ENCODE measurements at regions of chr5 and their contacts with region 1.

Region 1: GRCh38 chr5:97162045-97162444 is 19.6 kb upstream of the LIX1 start:
- ATAC-seq: peak in 7 of 8 experiments; percentile 40 to 86 (median 65)
- H3K4me3 ChIP-seq: no peak overlapping the region
- H3K27ac ChIP-seq: no peak overlapping the region
- H3K4me1 ChIP-seq: peaks cover 5% of the 10 kb centered on the region in 2 donors

Region 2: DNA sequence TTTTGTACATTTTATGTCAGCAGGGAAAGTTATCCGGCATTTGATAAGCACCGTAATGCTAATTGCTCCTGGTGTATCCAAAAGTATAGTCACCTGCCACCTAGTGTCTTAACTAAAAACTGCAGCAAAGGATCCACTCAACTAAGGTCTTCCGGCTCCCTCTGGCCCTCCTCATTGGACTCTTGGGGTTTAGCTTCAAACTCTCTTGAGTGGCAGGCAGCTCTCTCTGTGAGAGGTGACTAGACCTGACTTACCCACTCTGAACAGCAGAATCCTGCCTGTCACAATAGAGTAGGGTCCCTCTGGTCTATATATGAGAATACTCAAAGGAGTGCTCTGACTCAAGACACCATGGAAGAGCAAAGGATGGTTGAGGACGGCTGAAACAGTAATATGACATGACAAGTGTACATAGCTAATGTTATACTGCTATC is 560.2 kb before region 1 on chr5:
- in situ Hi-C with region 1: loop called in 1 of 9 experiments (anchors 25 kb)
- ATAC-seq: peak; percentile 57 to 91 (median 64)
- H3K4me3 ChIP-seq: no peak overlapping the region
- H3K27ac ChIP-seq: no peak overlapping the region
- H3K4me1 ChIP-seq: peaks cover 0 to 16% of the 10 kb centered on the region in 2 donors

Region 3: GRCh38 chr5:96629774-96630173 is 532.3 kb before region 1 on chr5:
- in situ Hi-C with region 1: loop called in 2 of 9 experiments (anchors 25 kb)
- ATAC-seq: peak in 4 of 8 experiments; percentile 27 to 99 (median 84)
- H3K4me3 ChIP-seq: no peak overlapping the region
- H3K27ac ChIP-seq: no peak overlapping the region
- H3K4me1 ChIP-seq: no peaks in the 10 kb centered on the region

Region 4: DNA sequence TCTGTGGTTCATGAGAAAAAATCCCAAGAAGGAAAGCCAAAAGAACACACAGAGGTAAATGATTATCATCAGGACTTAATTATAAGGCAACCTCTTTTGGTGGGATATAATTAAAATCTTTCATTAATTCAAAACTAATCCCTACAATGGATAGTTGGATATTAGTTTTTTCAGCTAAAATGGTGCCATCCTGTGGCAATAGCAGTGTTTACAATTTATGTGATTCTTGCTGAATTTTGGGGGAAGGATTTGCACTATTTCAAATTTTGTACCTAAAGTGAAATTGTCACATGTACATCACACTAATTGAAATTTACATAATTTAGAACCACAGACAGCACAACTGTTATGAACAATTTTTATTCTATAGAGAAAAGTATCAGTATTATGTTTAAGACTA is 432.9 kb before region 1 on chr5:
- in situ Hi-C with region 1: loop called in 1 of 9 experiments (anchors 25 kb)
- ATAC-seq: no peak
- H3K4me3 ChIP-seq: no peak overlapping the region
- H3K27ac ChIP-seq: no peak overlapping the region
- H3K4me1 ChIP-seq: peaks cover 8 to 10% of the 10 kb centered on the region in 2 donors

Region 5: DNA sequence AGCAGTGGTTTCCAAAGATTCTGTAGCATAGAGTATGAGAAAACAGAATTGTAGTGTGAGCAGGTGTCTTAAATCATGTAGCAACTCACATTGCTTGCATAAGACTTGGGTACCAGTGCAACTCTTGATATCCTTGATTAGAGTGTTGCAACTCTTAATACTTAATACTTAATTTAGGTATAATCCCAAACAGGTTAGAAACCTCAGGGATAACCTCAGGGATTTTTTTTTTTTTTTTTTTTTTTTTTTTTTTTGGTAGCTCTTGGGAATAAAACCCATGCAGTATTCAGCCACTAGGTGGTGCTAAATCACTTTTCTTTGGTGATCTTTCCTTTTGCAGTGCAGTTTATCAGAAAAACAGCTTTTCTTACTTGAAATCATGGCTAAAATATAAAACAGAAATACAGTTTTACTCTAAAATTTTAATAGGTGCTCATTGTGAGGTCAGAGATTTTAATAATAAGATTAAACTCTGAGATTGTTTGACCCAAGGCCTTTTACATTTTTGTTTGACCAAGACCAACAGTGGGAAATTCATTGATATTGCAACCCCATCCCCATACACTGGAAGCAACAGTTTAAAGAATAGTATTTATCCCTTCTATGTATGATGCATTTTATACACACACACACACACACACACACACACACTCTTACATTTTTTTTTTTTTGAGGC is 409.6 kb before region 1 on chr5:
- in situ Hi-C with region 1: loop called in 7 of 9 experiments (anchors 10 to 25 kb)
- ATAC-seq: peak in 2 of 8 experiments; percentile 5 to 29
- H3K4me3 ChIP-seq: no peak overlapping the region
- H3K27ac ChIP-seq: peak overlapping the region in 1 of 2 donors; percentile 46
- H3K4me1 ChIP-seq: peaks cover 3 to 11% of the 10 kb centered on the region in 2 donors

Region 6: GRCh38 chr5:96781031-96781937 is 380.8 kb before region 1 on chr5:
- in situ Hi-C with region 1: loop called in 1 of 9 experiments (anchors 25 kb)
- ATAC-seq: peak in 1 of 8 experiments; percentile 13
- H3K4me3 ChIP-seq: no peak overlapping the region
- H3K27ac ChIP-seq: no peak overlapping the region
- H3K4me1 ChIP-seq: peaks cover 0 to 6% of the 10 kb centered on the region in 2 donors

Region 7: GRCh38 chr5:96997265-96997859 is 164.7 kb before region 1 on chr5:
- in situ Hi-C with region 1: loop called in 2 of 9 experiments (anchors 25 kb)
- ATAC-seq: peak in 4 of 8 experiments; percentile 47 to 78 (median 67)
- H3K4me3 ChIP-seq: no peak overlapping the region
- H3K27ac ChIP-seq: no peak overlapping the region
- H3K4me1 ChIP-seq: no peaks in the 10 kb centered on the region